ENCODE measurements at regions of chr14 and their contacts with region 1.

Region 1: DNA sequence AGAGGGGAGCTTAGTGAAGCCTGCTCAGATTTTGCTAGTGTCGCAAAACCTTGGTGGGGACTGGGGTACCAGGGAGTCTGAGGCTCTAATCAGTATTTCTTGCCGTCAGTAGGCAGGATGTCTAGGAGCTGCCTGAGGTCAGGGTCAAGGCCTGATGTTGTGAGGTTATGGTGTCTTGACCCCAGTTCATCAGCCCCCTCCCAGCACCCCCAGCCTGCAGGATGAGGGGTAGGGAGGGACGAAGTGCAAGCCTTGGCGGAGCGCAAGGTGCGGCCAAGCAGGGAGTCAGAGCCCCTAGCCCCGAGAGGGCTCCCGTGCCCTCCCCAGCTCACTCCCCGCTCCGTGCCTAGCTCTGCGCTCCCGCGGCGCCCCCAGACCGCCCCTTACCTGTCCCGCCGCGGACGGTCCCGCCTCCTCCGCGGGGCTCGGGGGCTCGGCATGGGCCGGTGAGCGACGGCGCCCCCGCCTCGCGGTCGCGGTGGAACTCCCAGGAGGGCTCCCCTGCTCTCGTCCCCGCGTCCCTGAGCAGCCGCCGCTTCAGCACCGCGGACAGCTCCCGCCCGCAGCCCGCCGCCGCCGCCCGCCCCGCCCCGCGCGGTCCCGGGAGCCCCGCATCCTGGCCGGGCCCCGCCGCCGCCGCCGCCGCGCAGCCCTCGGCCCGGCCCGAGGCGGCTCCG is 347 bp downstream of the SYNDIG1L start:
- DNase-seq: peak in 1 of 2 experiments; percentile 94
- H3K4me3 ChIP-seq: peak overlapping the region; percentile 34 to 60 (median 51)
- H3K27ac ChIP-seq: no peak overlapping the region
- H3K4me1 ChIP-seq: peaks cover 27 to 39% (median 30%) of the 10 kb centered on the region in 4 experiments
- H3K27me3 ChIP-seq: peaks cover 0 to 12% (median 7%) of the 10 kb centered on the region in 4 experiments; a peak in 4 of 7 replicates
- CTCF ChIP-seq: no peak
- EP300 ChIP-seq: peak in 1 of 2 experiments; percentile 70; a peak in 1 of 3 replicates
- POLR2A ChIP-seq: no peak
- RAD21 ChIP-seq: no peak

Region 2: DNA sequence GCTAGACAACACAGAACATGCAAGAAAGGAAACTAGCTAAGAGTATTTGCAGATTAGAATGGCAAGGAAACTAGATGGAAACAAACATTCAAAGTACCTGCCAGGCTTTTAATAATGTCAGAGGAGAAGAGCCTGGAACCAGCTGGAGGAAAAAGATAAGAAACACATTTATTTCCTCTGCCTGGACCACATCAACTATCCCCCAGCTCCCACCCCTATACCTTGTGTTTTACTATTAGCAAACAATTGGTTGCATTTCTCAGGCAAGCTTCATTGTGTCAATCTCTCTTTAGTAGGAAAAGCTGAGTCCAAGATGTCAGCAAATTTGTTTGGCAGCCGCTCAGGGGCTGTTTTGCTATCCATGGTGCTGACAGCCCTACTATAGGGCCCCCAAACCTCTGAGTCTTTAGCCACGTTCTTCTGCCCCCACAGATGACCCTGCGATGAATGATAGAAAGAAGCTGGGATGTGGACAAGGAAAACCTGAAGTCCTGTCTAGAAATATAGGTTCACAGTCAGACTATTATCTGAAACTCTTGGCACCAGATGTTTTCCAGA is 11.9 kb after region 1 on chr14:
- CTCF ChIA-PET with region 1: interaction called, 7 read pairs
- POLR2A ChIA-PET with region 1: interaction called, 13 read pairs
- DNase-seq: peak in 1 of 2 experiments; percentile 49
- H3K4me3 ChIP-seq: no peak overlapping the region
- H3K27ac ChIP-seq: no peak overlapping the region
- H3K4me1 ChIP-seq: peaks cover 2 to 12% (median 5%) of the 10 kb centered on the region in 4 experiments; a peak in 5 of 7 replicates
- H3K27me3 ChIP-seq: no peaks in the 10 kb centered on the region
- CTCF ChIP-seq: no peak
- EP300 ChIP-seq: no peak
- POLR2A ChIP-seq: no peak
- RAD21 ChIP-seq: 0 out of 4 replicates have a peak, but pooled peaks have one; percentile 4 to 10

Region 3: DNA sequence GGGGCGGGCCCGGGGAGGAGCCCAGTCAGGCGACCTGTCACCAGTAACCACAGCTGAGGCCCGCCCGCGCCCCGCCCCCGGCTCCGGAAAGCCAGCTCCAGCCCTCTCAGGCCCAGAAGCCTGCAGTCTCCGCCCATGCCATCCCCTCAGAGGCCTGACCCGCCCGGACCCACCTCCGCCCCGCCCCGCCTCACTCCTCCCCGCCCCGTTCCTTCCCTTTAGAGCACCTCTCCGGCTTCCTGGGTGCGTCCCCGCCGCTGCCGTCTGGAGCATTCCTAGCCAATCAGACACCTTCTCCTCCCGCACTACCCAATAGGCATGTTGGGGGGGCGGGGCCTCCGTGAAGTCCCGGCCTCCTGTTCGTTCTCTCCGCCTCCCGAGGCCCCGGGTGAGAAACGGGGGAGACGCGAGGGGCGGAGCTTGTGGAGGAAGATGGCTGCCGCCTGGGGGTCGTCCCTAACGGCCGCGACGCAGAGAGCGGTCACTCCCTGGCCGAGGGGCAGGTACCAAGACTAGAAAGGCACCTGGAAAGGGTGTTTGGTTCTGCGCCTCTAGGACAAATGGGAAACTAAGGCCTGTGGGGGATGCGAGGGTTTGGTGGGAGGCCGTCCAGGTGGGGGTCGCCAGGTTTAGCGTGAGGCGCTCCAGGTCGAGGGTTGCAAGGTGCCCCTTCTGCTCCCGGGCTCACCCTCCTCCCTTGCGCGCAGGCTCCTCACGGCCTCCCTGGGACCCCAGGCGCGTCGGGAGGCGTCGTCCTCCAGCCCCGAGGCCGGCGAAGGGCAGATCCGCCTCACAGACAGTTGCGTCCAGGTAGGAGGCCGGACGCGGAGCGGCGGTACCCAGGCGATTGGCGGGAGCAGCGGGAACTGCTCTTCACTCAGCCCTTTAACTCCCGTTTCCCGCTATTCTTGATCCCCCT is 67.9 kb after region 1 on chr14 and contains the start of gene ISCA2:
- CTCF ChIA-PET with region 1: no interaction called
- POLR2A ChIA-PET with region 1: no interaction called
- DNase-seq: peak; percentile 98 to 99
- H3K4me3 ChIP-seq: peak within 1 kb of the TSS; percentile 73 to 99 (median 95)
- H3K27ac ChIP-seq: peak within 1 kb of the TSS; percentile 86
- H3K4me1 ChIP-seq: peaks cover 0 to 4% (median 1%) of the 10 kb centered on the region in 4 experiments; a peak in 2 of 7 replicates
- H3K27me3 ChIP-seq: no peaks in the 10 kb centered on the region
- CTCF ChIP-seq: 0 out of 4 replicates have a peak, but pooled peaks of 1 of the 3 experiments have one; percentile 4
- EP300 ChIP-seq: no peak
- POLR2A ChIP-seq: peak; percentile 50 to 73
- RAD21 ChIP-seq: no peak
- total RNA-seq, gene ISCA2: 43.5 and 51.5 TPM in 2 replicates